Naive thymus-derived CD4-positive, alpha-beta T cell (primary cell): ENCODE measurements at regions of chr7 and their contacts with region 1.

Region 1: DNA sequence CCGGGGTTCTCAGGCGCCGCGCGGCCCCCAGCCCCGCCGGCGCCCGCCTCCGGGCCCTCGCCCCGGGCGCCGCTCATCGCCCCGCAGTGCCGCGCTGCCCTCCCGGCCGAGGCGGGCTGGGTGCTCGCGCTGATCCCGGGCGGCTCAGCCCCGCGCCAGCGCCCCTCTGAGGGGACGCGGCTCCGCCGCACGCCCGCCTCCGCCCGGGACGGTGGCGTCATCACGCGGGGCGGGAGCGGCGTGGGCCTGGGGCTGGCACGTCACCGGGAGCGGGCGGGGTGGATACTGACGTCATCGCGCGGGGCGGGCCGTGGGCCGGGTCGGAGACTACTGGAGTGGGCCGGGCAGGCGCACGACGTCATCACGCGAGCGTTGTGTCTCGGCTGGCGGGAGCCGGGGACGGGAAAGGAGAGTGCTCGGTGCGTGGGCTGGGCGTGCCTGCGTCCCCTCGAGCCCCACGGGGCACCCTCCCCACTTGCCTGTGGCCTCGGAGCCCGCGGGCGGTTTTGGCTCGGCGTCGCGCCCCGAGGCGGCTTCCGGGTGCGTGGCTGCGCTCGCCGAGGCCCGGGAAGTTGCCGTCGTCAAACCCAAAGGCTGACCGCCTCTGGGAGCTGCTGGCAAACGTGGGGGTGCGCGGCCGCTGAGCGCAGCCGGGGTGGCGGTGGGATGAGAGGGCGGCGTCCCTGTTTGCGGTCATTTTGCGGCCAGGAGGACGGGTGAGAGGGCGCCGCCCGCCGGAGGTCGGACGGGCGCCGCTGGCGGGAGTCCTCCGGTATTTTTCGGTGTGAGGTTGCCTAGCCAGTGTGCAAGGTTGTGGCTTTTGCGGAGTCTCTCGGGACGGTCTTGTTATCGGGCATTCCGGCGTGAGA is at the start of gene ESYT2:
- DNase-seq: peak; percentile 98 to 100 (median 100)
- ATAC-seq: peak; percentile 88
- H3K4me3 ChIP-seq: peak within 1 kb of the TSS; percentile 67
- H3K4me3 Mint-ChIP-seq: peak within 1 kb of the TSS; percentile 81 to 100 (median 91)
- H3K27ac ChIP-seq: peak within 1 kb of the TSS; percentile 97
- H3K27ac Mint-ChIP-seq: peak within 1 kb of the TSS; percentile 88 to 99 (median 95)
- H3K4me1 ChIP-seq: peaks cover 15 to 23% of the 10 kb centered on the region in 2 donors
- H3K4me1 Mint-ChIP-seq: peaks cover 17 to 46% (median 35%) of the 10 kb centered on the region in 7 donors
- H3K27me3 ChIP-seq: no peaks in the 10 kb centered on the region
- H3K27me3 Mint-ChIP-seq: peaks cover 0 to 11% (median 0%) of the 10 kb centered on the region in 5 donors
- total RNA-seq, gene ESYT2: 103 to 129 (median 113) TPM

Region 2: DNA sequence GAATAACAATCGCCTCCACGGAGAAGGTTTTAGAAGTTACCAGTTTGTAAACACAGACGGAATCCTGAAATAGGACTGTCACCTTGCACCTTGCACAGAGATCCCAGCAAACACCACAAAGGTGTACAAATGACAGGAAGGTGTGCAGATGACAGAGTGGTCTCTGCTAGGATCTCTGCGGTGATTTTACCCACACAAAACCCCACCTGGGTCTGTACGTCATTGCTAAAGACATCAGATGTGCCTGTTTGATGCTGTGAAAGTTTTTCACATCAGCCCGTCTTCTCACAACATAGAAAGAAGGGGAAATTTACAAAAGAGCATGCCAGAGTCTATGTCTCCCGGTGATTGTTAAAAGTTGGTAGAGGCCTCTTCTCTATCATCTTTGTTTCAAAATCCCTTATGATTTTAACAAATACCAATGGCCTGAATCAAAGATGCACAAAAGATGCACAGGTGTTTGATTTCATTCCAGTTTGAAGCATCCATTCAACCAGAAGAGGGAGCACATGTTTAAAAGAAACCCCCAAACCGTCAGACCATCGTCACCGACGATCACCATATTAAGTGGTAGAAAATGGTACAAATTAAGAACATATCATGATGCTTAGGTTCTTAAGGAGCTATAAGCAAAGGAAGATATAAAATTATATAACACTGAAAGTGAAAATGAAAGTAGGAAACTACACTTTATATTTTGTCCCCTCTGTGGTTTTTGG is 818.5 kb before region 1 on chr7:
- CTCF ChIA-PET with region 1: no interaction called
- POLR2A ChIA-PET with region 1: no interaction called
- intact Hi-C with region 1: no loop called
- DNase-seq: no peak
- ATAC-seq: no peak
- H3K4me3 ChIP-seq: no peak overlapping the region
- H3K4me3 Mint-ChIP-seq: peak overlapping the region in 5 of 10 donors; percentile 7 to 43 (median 22)
- H3K27ac ChIP-seq: no peak overlapping the region
- H3K27ac Mint-ChIP-seq: peak overlapping the region in 2 of 9 donors; percentile 2 to 20
- H3K4me1 ChIP-seq: no peaks in the 10 kb centered on the region
- H3K4me1 Mint-ChIP-seq: peaks cover 0 to 18% (median 7%) of the 10 kb centered on the region in 7 donors
- H3K27me3 ChIP-seq: no peaks in the 10 kb centered on the region
- H3K27me3 Mint-ChIP-seq: peaks cover 0 to 3% (median 0%) of the 10 kb centered on the region in 5 donors

Region 3: GRCh38 chr7:158662610-158663427 is 166.8 kb before region 1 on chr7:
- CTCF ChIA-PET with region 1: no interaction called
- POLR2A ChIA-PET with region 1: no interaction called
- intact Hi-C with region 1: no loop called
- DNase-seq: no peak
- ATAC-seq: peak; percentile 60
- H3K4me3 ChIP-seq: no peak overlapping the region
- H3K4me3 Mint-ChIP-seq: peak overlapping the region in 3 of 10 donors; percentile 18 to 43 (median 43)
- H3K27ac ChIP-seq: no peak overlapping the region
- H3K27ac Mint-ChIP-seq: peak overlapping the region in 6 of 9 donors; percentile 4 to 75 (median 35)
- H3K4me1 ChIP-seq: peaks cover 0 to 5% of the 10 kb centered on the region in 2 donors
- H3K4me1 Mint-ChIP-seq: peaks cover 0 to 11% (median 0%) of the 10 kb centered on the region in 7 donors
- H3K27me3 ChIP-seq: no peaks in the 10 kb centered on the region
- H3K27me3 Mint-ChIP-seq: no peaks in the 10 kb centered on the region

Region 4: DNA sequence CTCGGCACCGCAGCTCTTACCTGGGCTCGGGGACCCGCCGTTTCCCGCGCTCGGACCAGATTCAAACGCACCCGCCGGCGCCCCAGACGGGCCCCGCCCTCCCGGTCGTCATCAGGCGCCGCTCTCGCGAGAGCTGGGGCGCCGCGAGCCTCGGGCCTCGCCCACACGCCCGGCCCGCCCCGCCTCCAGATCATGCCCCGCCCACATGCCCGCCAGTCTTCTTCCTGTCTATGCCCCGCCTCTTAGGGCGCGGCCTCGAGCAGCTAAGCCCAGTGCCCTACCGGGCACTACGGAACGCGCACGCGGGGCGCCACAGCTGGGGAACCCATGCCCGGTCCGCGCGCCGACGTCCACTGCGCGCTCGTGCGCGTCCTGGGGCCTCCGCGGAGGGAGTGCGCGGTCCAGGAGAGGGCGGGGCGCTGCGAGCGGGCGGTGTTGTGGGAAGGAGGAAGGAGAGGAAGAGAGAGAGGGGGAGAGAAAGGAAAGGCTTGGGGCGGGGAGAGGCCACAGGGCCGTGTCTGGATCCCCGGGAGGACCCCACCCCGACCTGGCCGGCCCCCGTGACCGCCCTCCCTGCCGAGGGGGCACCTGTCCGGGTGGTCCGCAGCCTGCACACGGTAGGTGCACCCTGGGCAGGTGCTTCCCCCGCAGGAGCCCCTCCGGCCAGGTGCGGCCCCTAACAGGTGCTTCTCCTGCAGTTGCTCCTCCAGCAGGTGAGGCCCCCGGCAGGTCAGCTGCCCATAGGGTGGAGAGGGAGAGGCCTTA is 124.7 kb before region 1 on chr7 and contains the start of gene NCAPG2:
- CTCF ChIA-PET with region 1: no interaction called
- POLR2A ChIA-PET with region 1: interaction called, 5 read pairs
- intact Hi-C with region 1: loop called (anchors 1 kb)
- DNase-seq: peak; percentile 94 to 98 (median 97)
- ATAC-seq: peak; percentile 99
- H3K4me3 ChIP-seq: peak within 1 kb of the TSS; percentile 88
- H3K4me3 Mint-ChIP-seq: peak within 1 kb of the TSS; percentile 66 to 88 (median 85)
- H3K27ac ChIP-seq: peak within 1 kb of the TSS; percentile 82
- H3K27ac Mint-ChIP-seq: peak within 1 kb of the TSS; percentile 46 to 91 (median 81)
- H3K4me1 ChIP-seq: peaks cover 12 to 15% of the 10 kb centered on the region in 2 donors
- H3K4me1 Mint-ChIP-seq: peaks cover 11 to 45% (median 15%) of the 10 kb centered on the region in 7 donors
- H3K27me3 ChIP-seq: no peaks in the 10 kb centered on the region
- H3K27me3 Mint-ChIP-seq: no peaks in the 10 kb centered on the region
- total RNA-seq, gene NCAPG2: 6.0 to 88.7 (median 8.8) TPM

Region 5: DNA sequence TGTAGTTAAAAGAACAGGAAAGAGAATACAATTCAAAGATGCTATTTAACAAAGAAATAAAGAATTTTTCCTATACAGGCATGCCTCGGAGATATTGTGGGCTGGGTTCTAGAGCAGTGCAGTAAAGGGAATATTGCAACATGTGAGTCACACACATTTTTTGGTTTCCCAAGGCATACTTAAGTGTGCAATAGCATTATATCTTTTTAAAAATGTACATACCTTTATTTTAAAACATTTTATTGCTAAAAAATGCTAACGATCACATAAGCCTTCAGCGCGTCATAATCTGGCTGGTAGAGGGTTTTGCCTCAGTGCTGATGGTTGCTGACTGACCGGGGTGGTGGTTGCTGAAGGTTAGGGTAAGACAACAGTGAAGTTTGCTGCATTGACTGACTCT is 54.6 kb before region 1 on chr7:
- CTCF ChIA-PET with region 1: interaction called, 4 read pairs
- POLR2A ChIA-PET with region 1: interaction called, 15 read pairs
- intact Hi-C with region 1: loop called in 1 of 2 experiments (anchors 1 kb)
- DNase-seq: no peak
- ATAC-seq: no peak
- H3K4me3 ChIP-seq: no peak overlapping the region
- H3K4me3 Mint-ChIP-seq: peak overlapping the region in 8 of 10 donors; percentile 45 to 75 (median 62)
- H3K27ac ChIP-seq: peak overlapping the region; percentile 11
- H3K27ac Mint-ChIP-seq: peak overlapping the region in 7 of 9 donors; percentile 64 to 94 (median 81)
- H3K4me1 ChIP-seq: peaks cover 8 to 58% of the 10 kb centered on the region in 2 donors
- H3K4me1 Mint-ChIP-seq: peaks cover 0 to 52% (median 30%) of the 10 kb centered on the region in 7 donors
- H3K27me3 ChIP-seq: no peaks in the 10 kb centered on the region
- H3K27me3 Mint-ChIP-seq: no peaks in the 10 kb centered on the region

Region 6: DNA sequence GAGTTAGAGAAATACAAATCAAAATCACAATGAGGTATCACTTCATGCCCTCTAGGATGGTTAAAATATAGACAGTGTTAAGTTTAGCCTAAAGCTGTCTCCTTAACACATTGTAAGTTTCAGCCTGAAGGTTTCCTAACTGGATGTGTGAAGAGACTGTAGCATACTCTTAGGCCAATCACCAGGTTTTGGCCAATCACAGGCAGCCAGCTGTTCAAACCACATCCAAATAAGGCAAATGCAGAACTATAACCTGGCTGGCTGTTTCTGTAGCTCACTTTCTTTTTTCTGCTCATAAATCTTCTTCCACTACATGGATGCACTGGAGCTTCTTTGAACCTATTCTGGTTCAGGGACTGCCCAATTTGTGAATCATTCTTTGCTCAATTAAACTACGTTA is 20.0 kb before region 1 on chr7:
- CTCF ChIA-PET with region 1: interaction called, 26 read pairs
- POLR2A ChIA-PET with region 1: interaction called, 67 read pairs
- intact Hi-C with region 1: loop called (anchors 1 to 2 kb)
- DNase-seq: no peak
- ATAC-seq: peak; percentile 45
- H3K4me3 ChIP-seq: no peak overlapping the region
- H3K4me3 Mint-ChIP-seq: peak overlapping the region in 9 of 10 donors; percentile 51 to 87 (median 68)
- H3K27ac ChIP-seq: peak overlapping the region; percentile 8
- H3K27ac Mint-ChIP-seq: peak overlapping the region; percentile 84 to 99 (median 96)
- H3K4me1 ChIP-seq: peaks cover 25 to 49% of the 10 kb centered on the region in 2 donors
- H3K4me1 Mint-ChIP-seq: peaks cover 52 to 99% (median 79%) of the 10 kb centered on the region in 7 donors
- H3K27me3 ChIP-seq: no peaks in the 10 kb centered on the region
- H3K27me3 Mint-ChIP-seq: no peaks in the 10 kb centered on the region

Region 7: GRCh38 chr7:158847451-158847866 is 17.9 kb after region 1 on chr7:
- CTCF ChIA-PET with region 1: interaction called, 4 read pairs
- POLR2A ChIA-PET with region 1: interaction called, 27 read pairs
- intact Hi-C with region 1: loop called (anchors 1 kb)
- DNase-seq: no peak
- ATAC-seq: peak; percentile 47
- H3K4me3 ChIP-seq: peak overlapping the region; percentile 47
- H3K4me3 Mint-ChIP-seq: peak overlapping the region; percentile 67 to 90 (median 84)
- H3K27ac ChIP-seq: peak overlapping the region; percentile 75
- H3K27ac Mint-ChIP-seq: peak overlapping the region; percentile 87 to 100 (median 94)
- H3K4me1 ChIP-seq: peaks cover 15 to 16% of the 10 kb centered on the region in 2 donors
- H3K4me1 Mint-ChIP-seq: peaks cover 1 to 41% (median 30%) of the 10 kb centered on the region in 7 donors
- H3K27me3 ChIP-seq: no peaks in the 10 kb centered on the region
- H3K27me3 Mint-ChIP-seq: peaks cover 0 to 3% (median 0%) of the 10 kb centered on the region in 5 donors

Region 8: GRCh38 chr7:158863611-158864506 is 34.3 kb after region 1 on chr7:
- CTCF ChIA-PET with region 1: interaction called, 4 read pairs
- POLR2A ChIA-PET with region 1: interaction called, 10 read pairs
- intact Hi-C with region 1: loop called in 1 of 2 experiments (anchors 1 kb)
- DNase-seq: peak in 8 of 9 donors; percentile 23 to 50 (median 40)
- ATAC-seq: peak; percentile 77
- H3K4me3 ChIP-seq: peak overlapping the region; percentile 44
- H3K4me3 Mint-ChIP-seq: peak overlapping the region; percentile 86 to 98 (median 90)
- H3K27ac ChIP-seq: peak overlapping the region; percentile 62
- H3K27ac Mint-ChIP-seq: peak overlapping the region; percentile 85 to 98 (median 94)
- H3K4me1 ChIP-seq: peaks cover 0 to 22% of the 10 kb centered on the region in 2 donors
- H3K4me1 Mint-ChIP-seq: peaks cover 15 to 72% (median 62%) of the 10 kb centered on the region in 7 donors
- H3K27me3 ChIP-seq: no peaks in the 10 kb centered on the region
- H3K27me3 Mint-ChIP-seq: no peaks in the 10 kb centered on the region

Region 9: GRCh38 chr7:159126311-159127260 is 297.0 kb after region 1 on chr7:
- CTCF ChIA-PET with region 1: no interaction called
- POLR2A ChIA-PET with region 1: no interaction called
- intact Hi-C with region 1: no loop called
- DNase-seq: no peak
- ATAC-seq: no peak
- H3K4me3 ChIP-seq: no peak overlapping the region
- H3K4me3 Mint-ChIP-seq: no peak overlapping the region
- H3K27ac ChIP-seq: no peak overlapping the region
- H3K27ac Mint-ChIP-seq: no peak overlapping the region
- H3K4me1 ChIP-seq: no peaks in the 10 kb centered on the region
- H3K4me1 Mint-ChIP-seq: no peaks in the 10 kb centered on the region
- H3K27me3 ChIP-seq: no peaks in the 10 kb centered on the region
- H3K27me3 Mint-ChIP-seq: peaks cover 5 to 20% (median 19%) of the 10 kb centered on the region in 5 donors